ENCODE measurements at regions of chr16 and their contacts with region 1.

Region 1: DNA sequence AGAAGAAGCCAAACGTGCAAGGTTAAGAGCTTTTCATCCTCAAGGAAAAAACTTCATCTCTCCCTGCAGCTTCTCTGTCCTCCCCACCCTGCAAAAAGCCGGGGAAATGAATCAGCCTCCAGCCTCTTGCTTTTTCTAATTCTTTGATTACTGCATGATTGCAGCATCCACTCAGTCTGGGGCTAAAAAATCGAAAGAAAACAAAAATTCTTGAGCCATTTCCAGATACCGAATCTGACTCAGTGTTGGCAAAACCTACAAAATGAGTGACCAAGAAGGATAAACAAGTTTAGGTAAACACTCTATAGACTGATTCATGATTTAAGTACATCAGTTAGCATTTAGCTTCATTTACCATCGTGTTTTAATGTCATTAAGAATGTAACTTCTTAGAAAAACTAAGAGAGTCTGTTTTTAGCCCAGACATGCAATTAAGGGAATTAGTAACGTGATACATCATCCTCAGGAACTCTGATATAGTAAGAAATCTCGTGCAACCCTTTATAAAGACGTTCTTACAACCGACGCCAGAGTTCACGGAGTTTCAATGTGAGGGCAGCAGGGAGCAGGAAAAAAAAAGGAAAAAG is 287.3 kb upstream of the FOXF1 start:
- DNase-seq: no peak
- H3K4me3 ChIP-seq: peak overlapping the region in 1 of 2 donors; percentile 16
- H3K27ac ChIP-seq: peak overlapping the region; percentile 79
- H3K4me1 ChIP-seq: peaks cover 8% of the 10 kb centered on the region
- H3K27me3 ChIP-seq: no peaks in the 10 kb centered on the region
- CTCF ChIP-seq: no peak
- POLR2A ChIP-seq: no peak

Region 2: GRCh38 chr16:86258713-86259112 is 35.7 kb after region 1 on chr16:
- intact Hi-C with region 1: loop called (anchors 1 kb)
- DNase-seq: no peak
- H3K4me3 ChIP-seq: no peak overlapping the region
- H3K27ac ChIP-seq: no peak overlapping the region
- H3K4me1 ChIP-seq: no peaks in the 10 kb centered on the region
- H3K27me3 ChIP-seq: no peaks in the 10 kb centered on the region
- CTCF ChIP-seq: no peak
- POLR2A ChIP-seq: no peak